Adrenal gland (tissue), 19 donors: ENCODE measurements at regions of chr9 and their contacts with region 1.

Region 1: GRCh38 chr9:109192732-109193361 is 25.8 kb upstream of the FRRS1L start:
- DNase-seq: peak; percentile 25 to 66 (median 42)
- H3K4me3 ChIP-seq: no peak overlapping the region
- H3K27ac ChIP-seq: no peak overlapping the region
- H3K4me1 ChIP-seq: no peaks in the 10 kb centered on the region
- H3K27me3 ChIP-seq: no peaks in the 10 kb centered on the region
- CTCF ChIP-seq: peak in 5 of 6 experiments; percentile 25 to 59 (median 51)
- POLR2A ChIP-seq: no peak

Region 2: DNA sequence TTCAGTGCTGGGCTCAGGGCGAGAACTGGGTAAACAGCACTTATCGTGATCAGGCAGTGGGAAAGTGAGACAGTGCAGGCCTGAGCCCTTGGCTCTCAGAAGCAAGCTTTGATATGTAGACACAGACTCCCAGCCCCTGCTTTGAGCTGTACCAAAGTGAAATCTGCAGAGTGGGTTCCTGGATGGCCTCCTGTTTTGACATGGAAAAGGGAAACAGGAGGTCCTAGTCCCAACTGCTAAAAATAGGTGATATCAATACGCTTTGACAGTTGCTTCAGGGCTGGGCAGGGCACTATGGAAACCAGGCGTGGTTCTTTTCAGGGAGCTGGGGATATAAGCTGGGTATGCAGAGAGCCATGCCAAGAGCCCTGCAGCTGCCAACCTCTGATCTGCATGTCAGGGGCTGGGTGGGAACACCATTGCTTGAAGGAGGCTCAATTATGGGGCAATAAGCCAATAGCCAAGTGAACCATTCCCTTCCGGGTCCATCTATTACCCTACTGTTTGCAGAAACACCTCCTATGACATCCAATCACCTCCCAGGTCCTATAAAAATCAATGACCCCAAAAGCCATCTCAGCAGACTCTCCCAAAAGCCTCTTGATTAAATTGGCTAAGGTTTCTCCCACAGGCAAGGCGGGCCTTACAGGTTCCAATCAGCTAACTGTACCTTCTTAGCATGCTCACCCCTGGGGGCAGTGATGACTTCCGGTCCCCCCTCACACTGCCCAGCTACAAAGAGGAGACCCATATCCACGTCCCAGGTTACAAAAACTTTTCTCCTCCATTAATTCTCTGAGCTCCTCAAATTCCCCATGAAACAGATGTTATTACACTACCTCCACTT is 82.3 kb after region 1 on chr9:
- intact Hi-C with region 1: no loop called
- DNase-seq: no peak
- H3K4me3 ChIP-seq: no peak overlapping the region
- H3K27ac ChIP-seq: no peak overlapping the region
- H3K4me1 ChIP-seq: no peaks in the 10 kb centered on the region
- H3K27me3 ChIP-seq: no peaks in the 10 kb centered on the region
- CTCF ChIP-seq: no peak
- POLR2A ChIP-seq: no peak

Region 3: GRCh38 chr9:109401168-109401989 is 208.5 kb after region 1 on chr9:
- intact Hi-C with region 1: loop called in 1 of 2 experiments (anchors 10 kb)
- DNase-seq: peak; percentile 63 to 86 (median 75)
- H3K4me3 ChIP-seq: no peak overlapping the region
- H3K27ac ChIP-seq: no peak overlapping the region
- H3K4me1 ChIP-seq: no peaks in the 10 kb centered on the region
- H3K27me3 ChIP-seq: no peaks in the 10 kb centered on the region
- CTCF ChIP-seq: peak; percentile 73 to 87 (median 81)
- POLR2A ChIP-seq: no peak